ENCODE measurements at regions of chr7 and their contacts with region 1.

Region 1: GRCh38 chr7:19713676-19714075 is 4.8 kb upstream of the POLR1F start:
- DNase-seq: peak; percentile 58
- H3K4me3 Mint-ChIP-seq: no peak overlapping the region
- H3K27ac Mint-ChIP-seq: no peak overlapping the region
- H3K4me1 Mint-ChIP-seq: peaks cover 16% of the 10 kb centered on the region
- H3K27me3 Mint-ChIP-seq: no peaks in the 10 kb centered on the region
- CTCF ChIP-seq: peak; percentile 47

Region 2: GRCh38 chr7:18916826-18917225 is 796.9 kb before region 1 on chr7:
- CTCF ChIA-PET with region 1: no interaction called
- POLR2A ChIA-PET with region 1: no interaction called
- intact Hi-C with region 1: no loop called
- DNase-seq: no peak
- H3K4me3 Mint-ChIP-seq: no peak overlapping the region
- H3K27ac Mint-ChIP-seq: no peak overlapping the region
- H3K4me1 Mint-ChIP-seq: no peaks in the 10 kb centered on the region
- H3K27me3 Mint-ChIP-seq: no peaks in the 10 kb centered on the region
- CTCF ChIP-seq: no peak

Region 3: GRCh38 chr7:19698331-19698730 is 15.3 kb before region 1 on chr7:
- CTCF ChIA-PET with region 1: interaction called, 10 read pairs
- POLR2A ChIA-PET with region 1: interaction called, 18 read pairs
- intact Hi-C with region 1: no loop called
- DNase-seq: no peak
- H3K4me3 Mint-ChIP-seq: no peak overlapping the region
- H3K27ac Mint-ChIP-seq: no peak overlapping the region
- H3K4me1 Mint-ChIP-seq: no peaks in the 10 kb centered on the region
- H3K27me3 Mint-ChIP-seq: no peaks in the 10 kb centered on the region
- CTCF ChIP-seq: no peak

Region 4: GRCh38 chr7:19725770-19726169 is 12.1 kb after region 1 on chr7:
- CTCF ChIA-PET with region 1: interaction called, 21 read pairs
- POLR2A ChIA-PET with region 1: interaction called, 3 read pairs
- intact Hi-C with region 1: no loop called
- DNase-seq: no peak
- H3K4me3 Mint-ChIP-seq: no peak overlapping the region
- H3K27ac Mint-ChIP-seq: no peak overlapping the region
- H3K4me1 Mint-ChIP-seq: no peaks in the 10 kb centered on the region
- H3K27me3 Mint-ChIP-seq: peaks cover 22% of the 10 kb centered on the region
- CTCF ChIP-seq: no peak